ENCODE measurements at regions of chr4 and their contacts with region 1.

Region 1: GRCh38 chr4:40199999-40200874 is 3.4 kb downstream of the RHOH start:
- DNase-seq: peak; percentile 76
- ATAC-seq: peak; percentile 43
- H3K4me3 Mint-ChIP-seq: peak overlapping the region; percentile 93
- H3K27ac Mint-ChIP-seq: peak overlapping the region; percentile 97
- H3K4me1 Mint-ChIP-seq: peaks cover 40% of the 10 kb centered on the region
- H3K27me3 Mint-ChIP-seq: no peaks in the 10 kb centered on the region

Region 2: DNA sequence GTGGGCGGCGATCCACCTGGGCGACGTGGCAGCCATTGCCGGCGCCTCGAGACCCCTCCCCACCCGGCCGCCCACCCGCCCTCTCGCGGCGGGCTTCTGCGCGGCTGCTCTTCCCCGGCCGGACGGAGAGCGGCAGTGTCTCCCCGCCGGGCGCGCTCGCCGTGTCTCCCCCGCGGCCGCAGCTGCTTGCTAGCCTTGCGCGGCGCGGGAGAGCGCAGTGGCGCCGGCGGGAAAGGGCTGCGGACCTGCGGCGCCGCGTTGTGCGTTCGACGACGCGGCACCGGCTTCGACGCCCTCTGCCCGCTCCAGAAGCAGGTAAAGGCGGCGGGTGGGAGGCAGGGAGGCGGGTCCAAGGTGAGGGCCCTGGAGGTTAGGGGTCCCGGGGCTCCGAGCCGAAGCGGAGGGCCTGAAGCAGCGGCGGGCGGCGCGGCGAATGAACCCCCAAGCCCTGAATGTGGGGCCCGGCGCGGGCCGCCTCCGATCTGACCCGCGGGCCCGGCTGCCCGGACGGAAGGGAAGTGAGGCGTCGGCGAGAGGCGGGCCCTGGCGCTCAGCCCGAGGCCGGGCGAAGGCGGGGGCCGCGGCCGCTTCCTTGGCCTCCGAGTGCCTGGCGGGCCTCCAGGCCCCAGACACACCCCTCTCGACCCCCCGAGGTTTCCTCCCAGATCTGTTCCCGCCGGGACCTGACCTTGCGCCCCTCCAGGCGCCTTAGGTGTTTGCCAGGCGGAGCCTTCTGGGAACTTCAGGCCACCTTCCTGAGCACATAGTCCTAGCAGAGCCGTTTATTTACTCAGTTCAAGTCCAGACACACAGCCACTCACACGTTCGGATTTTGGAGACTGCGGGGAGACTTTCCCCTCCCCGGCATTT is 143.3 kb before region 1 on chr4 and contains the start of gene N4BP2:
- POLR2A ChIA-PET with region 1: interaction called, 134 read pairs
- DNase-seq: peak; percentile 86
- ATAC-seq: peak; percentile 51
- H3K4me3 Mint-ChIP-seq: peak within 1 kb of the TSS; percentile 95
- H3K27ac Mint-ChIP-seq: peak within 1 kb of the TSS; percentile 96
- H3K4me1 Mint-ChIP-seq: peaks cover 26% of the 10 kb centered on the region
- H3K27me3 Mint-ChIP-seq: peaks cover 5% of the 10 kb centered on the region
- total RNA-seq, gene N4BP2: 31.9 to 33.5 TPM

Region 3: DNA sequence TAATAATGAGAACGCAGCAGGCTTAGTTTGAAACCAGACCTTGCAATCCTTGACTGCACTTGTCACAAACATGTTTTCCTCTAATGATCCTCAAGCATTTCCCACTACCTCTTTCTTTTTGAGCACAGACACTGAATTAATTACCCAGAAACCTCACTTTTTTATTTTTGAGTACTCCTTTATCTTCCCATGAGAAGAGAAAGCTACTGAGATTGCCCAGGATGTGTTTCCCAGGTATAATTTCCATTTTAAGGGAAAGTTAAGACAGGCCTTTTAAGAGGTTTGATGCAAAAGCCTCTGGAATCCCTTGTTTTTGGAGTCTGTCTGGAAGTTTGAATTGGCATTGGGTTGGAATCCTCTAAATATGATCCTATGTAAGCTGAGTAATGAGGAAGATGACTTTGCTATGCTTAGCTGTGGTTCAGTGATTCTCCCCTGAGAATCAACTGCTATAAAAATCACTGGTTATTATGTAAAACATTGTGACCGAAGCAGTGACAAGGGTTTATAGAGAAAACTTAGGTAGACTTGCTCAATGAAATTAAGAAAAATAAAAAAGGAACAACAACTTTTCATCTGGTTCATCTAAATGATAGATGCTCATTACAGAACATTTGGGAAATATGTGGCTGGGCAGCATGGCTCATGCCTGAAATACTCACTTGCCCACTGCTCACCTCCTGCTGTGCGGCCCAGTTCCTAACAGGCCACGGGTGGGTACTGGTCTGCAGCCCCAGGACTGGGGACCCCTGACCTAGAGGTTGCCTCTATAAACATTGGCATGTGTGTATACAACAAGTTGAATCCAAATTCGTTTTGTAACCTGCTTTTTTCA is 14.2 kb before region 1 on chr4:
- POLR2A ChIA-PET with region 1: interaction called, 146 read pairs
- DNase-seq: no peak
- ATAC-seq: no peak
- H3K4me3 Mint-ChIP-seq: no peak overlapping the region
- H3K27ac Mint-ChIP-seq: no peak overlapping the region
- H3K4me1 Mint-ChIP-seq: peaks cover 59% of the 10 kb centered on the region
- H3K27me3 Mint-ChIP-seq: no peaks in the 10 kb centered on the region

Region 4: DNA sequence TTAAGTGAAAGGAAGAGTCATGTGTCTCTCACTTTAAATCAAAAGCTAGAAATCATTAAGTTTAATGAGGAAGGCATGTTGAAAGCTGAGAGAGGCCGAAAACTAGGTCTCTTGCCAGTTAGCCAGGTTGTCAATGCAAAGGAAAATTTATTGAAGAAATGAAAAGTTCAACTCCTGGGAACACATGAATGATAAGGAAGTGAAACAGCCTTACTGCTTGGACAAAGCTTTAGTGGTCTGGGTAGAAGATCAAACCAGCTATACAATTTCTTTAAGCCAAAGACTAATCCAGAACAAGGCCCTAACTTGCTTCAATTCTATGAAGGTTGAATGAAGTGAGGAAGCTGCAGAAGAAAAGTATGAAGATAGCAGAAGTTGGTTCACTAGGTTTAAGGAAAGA is 21.5 kb after region 1 on chr4:
- POLR2A ChIA-PET with region 1: interaction called, 37 read pairs
- DNase-seq: no peak
- ATAC-seq: no peak
- H3K4me3 Mint-ChIP-seq: peak overlapping the region; percentile 70
- H3K27ac Mint-ChIP-seq: peak overlapping the region; percentile 82
- H3K4me1 Mint-ChIP-seq: peaks cover 77% of the 10 kb centered on the region
- H3K27me3 Mint-ChIP-seq: no peaks in the 10 kb centered on the region

Region 5: GRCh38 chr4:40238700-40239548 is 38.7 kb after region 1 on chr4:
- POLR2A ChIA-PET with region 1: interaction called, 64 read pairs
- DNase-seq: peak; percentile 60
- ATAC-seq: peak; percentile 90
- H3K4me3 Mint-ChIP-seq: peak overlapping the region; percentile 81
- H3K27ac Mint-ChIP-seq: peak overlapping the region; percentile 92
- H3K4me1 Mint-ChIP-seq: peaks cover 79% of the 10 kb centered on the region
- H3K27me3 Mint-ChIP-seq: no peaks in the 10 kb centered on the region

Region 6: GRCh38 chr4:40301603-40302002 is 101.4 kb after region 1 on chr4:
- POLR2A ChIA-PET with region 1: interaction called, 132 read pairs
- DNase-seq: peak; percentile 66
- ATAC-seq: peak; percentile 79
- H3K4me3 Mint-ChIP-seq: peak overlapping the region; percentile 82
- H3K27ac Mint-ChIP-seq: peak overlapping the region; percentile 95
- H3K4me1 Mint-ChIP-seq: peaks cover 69% of the 10 kb centered on the region
- H3K27me3 Mint-ChIP-seq: no peaks in the 10 kb centered on the region

Region 7: GRCh38 chr4:40316782-40317635 is 116.8 kb after region 1 on chr4:
- POLR2A ChIA-PET with region 1: interaction called, 132 read pairs
- DNase-seq: peak; percentile 60
- ATAC-seq: peak; percentile 82
- H3K4me3 Mint-ChIP-seq: peak overlapping the region; percentile 91
- H3K27ac Mint-ChIP-seq: peak overlapping the region; percentile 96
- H3K4me1 Mint-ChIP-seq: peaks cover 41% of the 10 kb centered on the region
- H3K27me3 Mint-ChIP-seq: no peaks in the 10 kb centered on the region

Measured in activated naive CD8-positive, alpha-beta T cell treated with anti-CD3 and anti-CD28 coated beads, Interleukin-2, amount 10 ng/mL, durations not matched to agents 7 days and 5 days (primary cell).